Heart left ventricle (tissue), 16 donors: ENCODE measurements at regions of chrX and their contacts with region 1.

Region 1: GRCh38 chrX:31213941-31214340 is 142.1 kb upstream of the FTHL17 start:
- DNase-seq: no peak
- ATAC-seq: no peak
- H3K4me3 ChIP-seq: no peak overlapping the region
- H3K27ac ChIP-seq: no peak overlapping the region
- H3K4me1 ChIP-seq: peaks cover 0 to 25% (median 10%) of the 10 kb centered on the region in 12 donors
- H3K27me3 ChIP-seq: no peaks in the 10 kb centered on the region
- CTCF ChIP-seq: peak in 11 of 12 donors; percentile 18 to 56 (median 43)
- POLR2A ChIP-seq: no peak

Region 2: GRCh38 chrX:31036895-31037294 is 177.0 kb before region 1 on chrX:
- intact Hi-C with region 1: loop called in 1 of 10 experiments (anchors 10 kb)
- DNase-seq: peak in 4 of 5 donors; percentile 19 to 50 (median 36)
- ATAC-seq: peak in 2 of 4 donors; percentile 69 to 85
- H3K4me3 ChIP-seq: no peak overlapping the region
- H3K27ac ChIP-seq: no peak overlapping the region
- H3K4me1 ChIP-seq: no peaks in the 10 kb centered on the region
- H3K27me3 ChIP-seq: peaks cover 0 to 3% (median 0%) of the 10 kb centered on the region in 9 donors
- CTCF ChIP-seq: peak; percentile 30 to 68 (median 51)
- POLR2A ChIP-seq: no peak

Region 3: DNA sequence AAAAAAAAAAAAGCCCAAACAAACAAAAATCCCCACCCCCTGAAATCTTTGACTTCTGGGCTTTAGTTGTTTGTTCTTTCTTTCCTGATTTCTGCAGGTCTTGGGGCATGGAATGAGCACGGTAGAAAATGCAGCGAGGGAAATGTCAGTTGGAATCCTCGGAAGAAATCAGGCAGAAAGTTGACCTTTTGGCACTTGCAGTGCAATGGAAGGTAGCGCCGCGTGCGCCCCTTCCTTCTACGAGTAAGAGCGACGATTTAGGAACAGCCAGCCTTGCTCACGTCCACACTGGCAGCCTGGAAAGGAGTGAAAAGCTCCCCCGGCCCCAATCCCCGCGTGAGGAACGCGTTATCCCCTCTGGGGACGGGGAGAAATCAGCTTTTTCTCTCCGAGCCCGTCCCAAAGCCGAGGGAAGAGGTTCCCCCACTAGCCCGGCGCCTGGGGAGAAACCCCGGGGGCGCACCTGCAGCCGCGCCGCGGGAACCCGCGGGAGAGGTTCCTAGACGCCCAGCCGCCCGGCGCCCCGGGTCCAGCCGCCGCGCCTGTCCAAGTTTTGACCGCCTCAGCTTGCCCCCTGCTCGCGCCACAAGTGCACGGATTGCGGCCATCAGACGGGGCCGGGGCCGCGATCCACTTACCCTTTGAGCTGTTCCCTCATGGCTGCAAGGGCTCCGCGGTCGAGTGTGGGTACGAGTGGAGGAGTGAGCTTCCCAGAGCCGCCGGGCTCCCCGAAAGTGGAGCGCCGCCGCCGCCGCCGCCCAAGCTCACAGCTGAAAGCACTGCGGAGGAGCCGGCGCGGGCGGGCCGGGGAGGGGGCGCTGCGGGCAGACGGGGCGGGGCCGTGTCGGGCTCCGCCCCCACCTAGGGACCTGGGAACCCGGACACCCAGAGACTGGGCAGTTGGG is 52.5 kb after region 1 on chrX:
- intact Hi-C with region 1: loop called in 1 of 10 experiments (anchors 10 kb)
- DNase-seq: peak; percentile 50 to 78 (median 63)
- ATAC-seq: peak; percentile 79 to 93 (median 91)
- H3K4me3 ChIP-seq: peak overlapping the region; percentile 39 to 90 (median 69)
- H3K27ac ChIP-seq: peak overlapping the region in 11 of 12 donors; percentile 34 to 81 (median 70)
- H3K4me1 ChIP-seq: peaks cover 0 to 7% (median 0%) of the 10 kb centered on the region in 12 donors
- H3K27me3 ChIP-seq: peaks cover 0 to 9% (median 0%) of the 10 kb centered on the region in 9 donors
- CTCF ChIP-seq: no peak
- POLR2A ChIP-seq: peak in 1 of 2 donors; percentile 44

Region 4: GRCh38 chrX:31423609-31424189 is 209.8 kb after region 1 on chrX:
- intact Hi-C with region 1: loop called in 1 of 10 experiments (anchors 10 kb)
- DNase-seq: peak in 3 of 5 donors; percentile 29 to 44 (median 31)
- ATAC-seq: peak in 1 of 4 donors; percentile 34
- H3K4me3 ChIP-seq: peak overlapping the region in 5 of 12 donors; percentile 1 to 28 (median 26)
- H3K27ac ChIP-seq: peak overlapping the region in 4 of 12 donors; percentile 11 to 28 (median 18)
- H3K4me1 ChIP-seq: peaks cover 0 to 11% (median 0%) of the 10 kb centered on the region in 12 donors
- H3K27me3 ChIP-seq: no peaks in the 10 kb centered on the region
- CTCF ChIP-seq: peak in 9 of 12 donors; percentile 10 to 48 (median 29)
- POLR2A ChIP-seq: no peak